ENCODE measurements at regions of chr9 and their contacts with region 1.

Region 1: GRCh38 chr9:93920131-93920800 is 34.9 kb downstream of the BARX1 start:
- DNase-seq: no peak
- H3K4me3 ChIP-seq: no peak overlapping the region
- H3K27ac ChIP-seq: no peak overlapping the region
- H3K4me1 ChIP-seq: no peaks in the 10 kb centered on the region
- H3K27me3 ChIP-seq: peaks cover 4% of the 10 kb centered on the region
- CTCF ChIP-seq: no peak

Region 2: GRCh38 chr9:93859431-93860215 is 60.6 kb before region 1 on chr9:
- CTCF ChIA-PET with region 1: no interaction called
- dilution Hi-C with region 1: loop called (anchors 10 kb)
- in situ Hi-C with region 1: no loop called
- intact Hi-C with region 1: no loop called
- DNase-seq: no peak
- H3K4me3 ChIP-seq: no peak overlapping the region
- H3K27ac ChIP-seq: no peak overlapping the region
- H3K4me1 ChIP-seq: no peaks in the 10 kb centered on the region
- H3K27me3 ChIP-seq: peaks cover 3% of the 10 kb centered on the region
- CTCF ChIP-seq: no peak

Region 3: GRCh38 chr9:94199776-94200175 is 279.5 kb after region 1 on chr9:
- CTCF ChIA-PET with region 1: no interaction called
- dilution Hi-C with region 1: no loop called
- in situ Hi-C with region 1: no loop called
- intact Hi-C with region 1: no loop called
- DNase-seq: no peak
- H3K4me3 ChIP-seq: no peak overlapping the region
- H3K27ac ChIP-seq: no peak overlapping the region
- H3K4me1 ChIP-seq: no peaks in the 10 kb centered on the region
- H3K27me3 ChIP-seq: no peaks in the 10 kb centered on the region
- CTCF ChIP-seq: no peak

Measured in mammary epithelial cell (primary cell).